Activated naive CD4-positive, alpha-beta T cell treated with anti-CD3 and anti-CD28 coated beads for 36 hours (primary cell): ENCODE measurements at regions of chr15 and their contacts with region 1.

Region 1: DNA sequence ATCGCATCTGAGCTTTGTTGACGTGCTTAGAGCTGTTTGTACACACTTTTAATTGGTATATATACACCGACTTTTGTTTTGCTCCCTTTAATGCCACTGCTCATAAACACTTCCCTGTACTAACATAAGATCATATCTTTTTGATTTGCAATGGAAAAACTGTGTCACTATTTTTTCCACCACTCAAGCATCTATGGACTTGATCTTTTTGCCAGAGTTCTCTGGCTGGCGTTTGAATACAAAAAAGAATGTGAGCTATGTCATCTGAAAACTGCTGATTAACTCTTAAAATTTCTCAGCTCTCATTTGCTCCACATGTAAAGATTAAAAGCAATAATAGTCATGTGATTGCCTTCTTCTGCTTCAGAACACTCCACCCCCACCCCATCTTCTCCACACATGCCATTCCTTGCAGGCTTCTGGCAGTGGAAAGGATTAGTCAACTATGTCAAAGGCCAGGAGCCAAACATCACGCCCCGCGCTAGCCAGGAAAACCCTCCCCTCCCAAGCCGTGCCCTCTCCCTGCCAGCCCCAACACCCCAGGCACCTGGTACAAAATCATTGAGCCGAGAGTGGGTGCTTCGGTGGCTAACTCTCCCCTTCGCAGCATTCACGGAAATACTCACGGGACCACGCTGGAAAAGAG is 123.4 kb upstream of the MEF2A start:
- DNase-seq: no peak
- H3K4me3 Mint-ChIP-seq: no peak overlapping the region
- H3K27ac Mint-ChIP-seq: no peak overlapping the region
- H3K4me1 Mint-ChIP-seq: peaks cover 57% of the 10 kb centered on the region
- H3K27me3 Mint-ChIP-seq: no peaks in the 10 kb centered on the region

Region 2: DNA sequence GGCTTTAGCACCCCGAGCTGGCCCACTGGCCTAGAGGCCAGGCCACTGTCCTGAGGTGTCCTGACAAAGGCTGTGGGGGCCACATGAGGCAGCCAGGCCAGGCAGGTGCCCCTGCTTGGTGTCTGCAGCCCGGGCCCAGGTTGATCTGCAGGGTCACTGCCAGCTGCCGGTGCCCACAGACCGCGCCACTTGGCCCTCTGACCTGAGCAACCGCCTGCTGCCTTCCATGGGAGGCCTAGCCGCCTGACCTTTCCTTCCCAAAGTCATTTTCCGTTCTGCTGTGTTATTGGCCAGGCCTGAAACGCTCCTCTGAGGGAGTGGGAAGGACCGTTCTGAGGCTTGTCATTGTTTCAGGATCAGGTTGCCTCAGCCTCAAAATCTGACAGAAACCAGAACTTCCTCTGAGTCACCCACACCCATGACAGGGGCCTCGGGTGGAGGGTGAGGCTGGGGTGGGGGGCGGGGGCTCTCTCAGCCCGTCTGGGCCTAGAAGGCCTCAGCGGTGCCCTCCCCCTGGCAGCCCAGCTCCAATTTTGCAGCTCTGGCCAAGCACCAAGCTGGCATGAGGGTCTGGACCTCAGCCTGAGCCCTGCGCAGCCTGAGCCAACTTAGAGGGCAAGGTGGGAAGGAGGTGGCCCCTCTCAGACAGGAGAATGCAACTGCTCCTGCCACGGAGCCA is 17.3 kb before region 1 on chr15:
- CTCF ChIA-PET with region 1: interaction called, 3 read pairs
- intact Hi-C with region 1: loop called (anchors 1 kb)
- DNase-seq: peak; percentile 83
- H3K4me3 Mint-ChIP-seq: no peak overlapping the region
- H3K27ac Mint-ChIP-seq: peak overlapping the region; percentile 53
- H3K4me1 Mint-ChIP-seq: peaks cover 55% of the 10 kb centered on the region
- H3K27me3 Mint-ChIP-seq: no peaks in the 10 kb centered on the region

Region 3: DNA sequence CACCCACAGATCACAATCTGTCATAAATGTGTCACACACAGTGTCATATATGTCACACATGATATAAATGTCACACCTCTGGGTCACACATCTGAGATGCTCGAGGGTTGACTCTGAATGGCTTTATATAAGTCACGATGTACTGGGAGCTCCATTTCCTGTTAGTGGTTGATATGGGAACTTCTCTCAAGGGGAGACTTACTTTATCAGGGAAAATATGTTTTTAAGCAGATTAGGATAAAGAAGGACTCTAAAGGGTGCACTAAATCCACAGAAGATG is 39.5 kb after region 1 on chr15:
- CTCF ChIA-PET with region 1: no interaction called
- intact Hi-C with region 1: loop called (anchors 2 kb)
- DNase-seq: no peak
- H3K4me3 Mint-ChIP-seq: no peak overlapping the region
- H3K27ac Mint-ChIP-seq: no peak overlapping the region
- H3K4me1 Mint-ChIP-seq: peaks cover 29% of the 10 kb centered on the region
- H3K27me3 Mint-ChIP-seq: peaks cover 2% of the 10 kb centered on the region